H1 (cell line): ENCODE measurements at regions of chr3 and their contacts with region 1.

Region 1: GRCh38 chr3:58167431-58168351 is 43.1 kb downstream of the DNASE1L3 start:
- DNase-seq: peak in 1 of 2 experiments; percentile 92
- H3K4me3 ChIP-seq: no peak overlapping the region
- H3K27ac ChIP-seq: no peak overlapping the region; the same call in 1 of the 2 replicates
- H3K4me1 ChIP-seq: peaks cover 0 to 5% (median 2%) of the 10 kb centered on the region in 4 experiments; a peak in 2 of 7 replicates
- H3K27me3 ChIP-seq: no peaks in the 10 kb centered on the region
- CTCF ChIP-seq: peak; percentile 73 to 97 (median 95)
- EP300 ChIP-seq: no peak
- POLR2A ChIP-seq: no peak
- RAD21 ChIP-seq: peak; percentile 49 to 58

Region 2: DNA sequence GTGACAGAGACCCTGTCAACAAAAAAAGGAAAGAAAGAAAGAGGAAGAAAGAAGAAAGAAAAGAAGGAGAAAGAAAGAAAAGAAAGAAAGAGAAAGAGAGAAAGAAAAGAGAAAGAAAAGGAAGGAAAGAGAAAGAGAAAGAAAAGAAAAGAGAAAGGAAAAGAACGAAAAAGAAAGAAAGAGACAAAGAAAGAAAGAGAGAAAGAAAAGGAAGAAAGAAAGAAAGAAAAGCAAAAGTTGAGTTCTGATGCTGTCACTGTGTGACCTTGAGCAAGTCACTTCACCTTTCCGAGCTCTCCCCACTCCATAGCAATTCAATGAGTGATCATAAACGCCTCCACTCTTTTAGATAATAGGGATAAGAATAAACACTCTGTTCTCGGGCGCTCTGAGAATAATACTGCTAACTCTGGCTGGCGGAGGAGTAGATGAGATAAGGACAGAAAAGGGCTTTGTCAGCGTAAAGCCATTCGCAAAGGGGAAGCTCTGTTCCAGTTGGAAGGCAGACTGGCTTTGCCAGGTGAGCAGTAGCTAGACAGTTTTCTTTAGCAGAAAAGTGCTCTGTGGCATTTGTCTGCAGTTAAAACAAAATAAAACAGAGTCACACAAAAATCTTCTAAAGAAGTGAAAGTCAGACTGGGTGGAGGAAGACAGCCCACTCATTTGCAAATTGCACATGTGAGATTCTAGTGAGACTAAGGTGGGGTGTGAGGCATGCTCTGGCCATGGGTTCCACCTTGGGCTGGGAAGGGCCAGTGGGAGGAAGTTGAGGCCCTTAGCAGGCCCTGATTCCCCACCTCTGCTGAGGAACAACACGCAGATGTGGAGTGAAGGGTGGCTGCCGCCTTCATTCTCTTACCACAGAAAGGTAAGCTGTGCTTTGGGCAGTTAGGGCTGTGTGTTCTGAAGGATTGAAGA is 169.1 kb before region 1 on chr3:
- CTCF ChIA-PET with region 1: interaction called, 12 read pairs
- POLR2A ChIA-PET with region 1: no interaction called
- DNase-seq: no peak
- H3K4me3 ChIP-seq: no peak overlapping the region
- H3K27ac ChIP-seq: no peak overlapping the region
- H3K4me1 ChIP-seq: peaks cover 0 to 3% (median 1%) of the 10 kb centered on the region in 4 experiments; a peak in 2 of 7 replicates
- H3K27me3 ChIP-seq: no peaks in the 10 kb centered on the region
- CTCF ChIP-seq: no peak
- EP300 ChIP-seq: no peak
- POLR2A ChIP-seq: no peak
- RAD21 ChIP-seq: no peak

Region 3: DNA sequence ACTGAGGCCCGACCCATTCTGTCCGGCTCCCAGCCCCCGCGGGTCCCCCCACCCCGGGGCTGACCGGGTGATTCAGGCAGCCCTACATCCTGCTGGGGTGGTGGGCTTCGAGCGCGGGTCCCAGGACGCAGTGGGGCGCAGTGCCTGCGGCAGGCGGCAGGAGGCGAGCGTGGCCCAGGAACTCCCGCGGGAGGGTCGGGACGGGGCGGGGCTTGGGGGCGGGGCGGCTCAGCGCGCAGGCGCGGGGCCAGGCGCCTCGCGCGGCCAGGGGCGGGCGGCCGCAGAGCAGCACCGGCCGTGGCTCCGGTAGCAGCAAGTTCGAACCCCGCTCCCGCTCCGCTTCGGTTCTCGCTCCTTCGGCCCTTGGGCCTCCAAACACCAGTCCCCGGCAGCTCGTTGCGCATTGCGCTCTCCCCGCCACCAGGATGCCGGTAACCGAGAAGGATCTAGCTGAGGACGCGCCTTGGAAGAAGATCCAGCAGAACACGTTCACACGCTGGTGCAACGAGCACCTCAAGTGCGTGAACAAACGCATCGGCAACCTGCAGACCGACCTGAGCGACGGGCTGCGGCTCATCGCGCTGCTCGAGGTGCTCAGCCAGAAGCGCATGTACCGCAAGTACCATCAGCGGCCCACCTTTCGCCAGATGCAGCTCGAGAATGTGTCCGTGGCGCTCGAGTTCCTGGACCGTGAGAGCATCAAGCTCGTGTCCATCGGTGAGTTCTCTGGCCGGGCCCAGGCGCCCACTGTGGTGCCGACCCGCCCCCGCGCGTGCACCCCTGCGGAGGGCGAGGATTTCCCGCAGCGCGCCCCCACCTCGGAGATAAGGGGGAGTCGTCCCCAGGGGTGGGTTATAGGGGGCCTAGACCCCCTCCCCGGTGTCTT is 159.3 kb before region 1 on chr3 and contains the start of gene FLNB:
- CTCF ChIA-PET with region 1: interaction called, 32 read pairs
- POLR2A ChIA-PET with region 1: interaction called, 5 read pairs
- DNase-seq: peak in 1 of 2 experiments; percentile 90
- H3K4me3 ChIP-seq: peak within 1 kb of the TSS; percentile 65 to 97 (median 90)
- H3K27ac ChIP-seq: peak within 1 kb of the TSS; percentile 62; the same call in 1 of the 2 replicates
- H3K4me1 ChIP-seq: peaks cover 4 to 19% (median 5%) of the 10 kb centered on the region in 4 experiments; a peak in 6 of 7 replicates
- H3K27me3 ChIP-seq: no peaks in the 10 kb centered on the region
- CTCF ChIP-seq: peak; percentile 68 to 95 (median 82)
- EP300 ChIP-seq: no peak
- POLR2A ChIP-seq: peak in 1 of 2 experiments; percentile 90; a peak in 2 of 3 replicates
- RAD21 ChIP-seq: peak; percentile 76 to 84
- total RNA-seq, gene FLNB: 118 and 122 TPM in 2 replicates

Region 4: DNA sequence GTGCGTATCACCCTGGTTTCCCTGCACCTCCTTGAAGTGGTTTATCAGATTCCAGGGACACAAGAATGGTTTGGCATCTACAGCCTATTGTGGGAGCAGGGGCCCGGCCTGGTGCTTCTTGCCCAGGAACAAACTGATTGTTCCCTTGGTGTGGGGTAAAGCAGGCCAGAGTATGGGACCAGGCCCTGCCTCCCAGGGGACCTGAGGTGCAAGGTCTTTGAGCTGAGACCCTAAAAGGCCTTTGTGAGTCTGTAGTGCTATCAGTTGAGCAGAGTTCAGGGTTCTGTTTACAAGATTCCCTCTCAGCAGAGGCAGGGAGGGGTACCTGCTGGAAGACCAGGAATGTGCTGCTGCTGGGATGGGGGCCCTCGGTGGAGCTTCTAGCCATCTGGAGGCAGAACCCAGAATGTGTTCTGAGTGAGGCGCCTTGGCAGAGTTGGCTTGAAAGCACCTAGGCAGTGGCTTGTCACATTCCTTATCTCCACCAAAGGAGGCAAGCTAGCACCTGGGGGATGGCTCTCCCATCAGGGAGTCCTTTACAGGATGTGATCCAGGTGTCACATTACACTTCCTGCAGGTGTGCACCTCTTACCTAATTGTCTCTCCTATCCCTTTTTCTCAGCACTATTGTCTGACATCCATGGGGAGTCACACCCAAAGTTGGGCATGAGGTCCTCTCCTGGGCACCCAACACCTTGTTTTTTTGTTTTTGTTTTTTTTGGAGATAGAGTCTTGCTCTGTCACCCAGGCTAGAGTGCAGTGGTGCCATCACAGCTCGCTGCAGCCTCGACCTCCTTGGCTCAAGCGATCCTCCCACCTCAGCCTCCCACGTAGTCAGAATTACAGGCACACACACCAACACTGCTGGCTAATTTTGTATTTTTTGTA is 146.4 kb before region 1 on chr3:
- CTCF ChIA-PET with region 1: interaction called, 13 read pairs
- POLR2A ChIA-PET with region 1: no interaction called
- DNase-seq: peak in 1 of 2 experiments; percentile 72
- H3K4me3 ChIP-seq: peak overlapping the region in 3 of 4 experiments; percentile 5 to 11 (median 7); a peak in 3 of 8 replicates
- H3K27ac ChIP-seq: peak overlapping the region; percentile 88
- H3K4me1 ChIP-seq: peaks cover 16 to 44% (median 33%) of the 10 kb centered on the region in 4 experiments
- H3K27me3 ChIP-seq: no peaks in the 10 kb centered on the region
- CTCF ChIP-seq: peak in 2 of 3 experiments; percentile 27 to 36; a peak in 2 of 4 replicates
- EP300 ChIP-seq: peak in 1 of 2 experiments; percentile 71; a peak in 1 of 3 replicates
- POLR2A ChIP-seq: peak in 1 of 2 experiments; percentile 69; a peak in 1 of 3 replicates
- RAD21 ChIP-seq: peak; percentile 34 to 57; a peak in 2 of 4 replicates

Region 5: GRCh38 chr3:58129041-58129770 is 38.5 kb before region 1 on chr3:
- CTCF ChIA-PET with region 1: interaction called, 15 read pairs
- POLR2A ChIA-PET with region 1: no interaction called
- DNase-seq: no peak
- H3K4me3 ChIP-seq: no peak overlapping the region
- H3K27ac ChIP-seq: no peak overlapping the region
- H3K4me1 ChIP-seq: no peaks in the 10 kb centered on the region
- H3K27me3 ChIP-seq: no peaks in the 10 kb centered on the region
- CTCF ChIP-seq: no peak
- EP300 ChIP-seq: no peak
- POLR2A ChIP-seq: no peak
- RAD21 ChIP-seq: no peak

Region 6: GRCh38 chr3:58135712-58136543 is 31.8 kb before region 1 on chr3:
- CTCF ChIA-PET with region 1: interaction called, 15 read pairs
- POLR2A ChIA-PET with region 1: no interaction called
- DNase-seq: no peak
- H3K4me3 ChIP-seq: no peak overlapping the region
- H3K27ac ChIP-seq: no peak overlapping the region
- H3K4me1 ChIP-seq: no peaks in the 10 kb centered on the region
- H3K27me3 ChIP-seq: no peaks in the 10 kb centered on the region
- CTCF ChIP-seq: no peak
- EP300 ChIP-seq: no peak
- POLR2A ChIP-seq: no peak
- RAD21 ChIP-seq: no peak

Region 7: DNA sequence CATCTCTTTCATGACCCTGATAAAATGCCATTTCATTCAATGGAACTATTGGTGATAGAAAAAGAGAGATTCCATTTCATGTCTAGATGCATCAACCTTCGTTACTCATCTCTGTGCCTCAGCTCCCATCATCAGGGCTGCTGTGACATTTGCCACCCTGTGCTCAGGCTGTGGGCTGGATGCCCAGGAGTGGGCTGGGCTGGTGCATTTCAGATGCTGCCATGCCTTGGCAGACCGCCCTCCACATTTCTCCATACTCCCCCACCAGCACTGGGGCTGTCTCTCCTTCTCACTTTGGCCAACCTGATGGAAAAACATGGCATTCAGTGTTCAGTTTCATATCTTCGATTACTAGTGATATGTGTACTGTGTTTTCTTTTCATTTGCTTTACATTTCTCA is 16.1 kb before region 1 on chr3:
- CTCF ChIA-PET with region 1: interaction called, 30 read pairs
- POLR2A ChIA-PET with region 1: interaction called, 4 read pairs
- DNase-seq: no peak
- H3K4me3 ChIP-seq: no peak overlapping the region
- H3K27ac ChIP-seq: no peak overlapping the region
- H3K4me1 ChIP-seq: no peaks in the 10 kb centered on the region
- H3K27me3 ChIP-seq: no peaks in the 10 kb centered on the region
- CTCF ChIP-seq: no peak
- EP300 ChIP-seq: no peak
- POLR2A ChIP-seq: no peak
- RAD21 ChIP-seq: no peak

Region 8: GRCh38 chr3:58242340-58242739 is 74.6 kb after region 1 on chr3:
- CTCF ChIA-PET with region 1: no interaction called
- POLR2A ChIA-PET with region 1: no interaction called
- DNase-seq: no peak
- H3K4me3 ChIP-seq: no peak overlapping the region
- H3K27ac ChIP-seq: no peak overlapping the region
- H3K4me1 ChIP-seq: peaks cover 0 to 6% (median 0%) of the 10 kb centered on the region in 4 experiments; a peak in 3 of 7 replicates
- H3K27me3 ChIP-seq: peaks cover 2 to 16% (median 14%) of the 10 kb centered on the region in 4 experiments
- CTCF ChIP-seq: no peak
- EP300 ChIP-seq: no peak
- POLR2A ChIP-seq: no peak
- RAD21 ChIP-seq: no peak